ENCODE measurements at regions of chr3 and their contacts with region 1.

Region 1: DNA sequence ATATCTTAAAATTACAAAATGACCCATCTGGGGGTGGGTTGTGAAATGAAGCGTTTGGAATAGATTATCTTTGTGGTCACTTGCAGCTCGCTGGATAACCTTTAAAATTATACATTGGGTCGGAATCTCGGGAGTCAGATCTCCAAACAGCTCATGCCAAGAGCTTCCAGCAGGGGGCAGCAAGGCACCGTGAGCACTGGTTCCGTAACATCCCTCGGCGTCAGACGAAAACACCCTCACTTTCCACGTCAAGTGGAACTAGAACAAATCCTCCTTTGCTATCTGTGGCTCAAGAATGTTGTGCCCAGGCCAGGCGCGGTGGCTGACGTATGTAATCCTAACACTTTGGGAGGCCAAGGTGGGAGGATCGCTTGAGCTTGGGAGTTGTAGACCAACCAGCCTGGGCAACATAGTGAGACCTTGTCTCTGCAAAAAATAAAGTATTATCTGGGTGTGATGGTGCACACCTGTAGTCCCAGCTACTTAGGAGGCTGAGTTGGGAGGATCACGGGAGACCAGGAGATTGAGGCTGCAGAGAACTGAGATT is 31.1 kb downstream of the UMPS start:
- DNase-seq: peak; percentile 67

Region 2: GRCh38 chr3:124492811-124493210 is 268.5 kb before region 1 on chr3:
- in situ Hi-C with region 1: no loop called
- DNase-seq: peak; percentile 73

Region 3: DNA sequence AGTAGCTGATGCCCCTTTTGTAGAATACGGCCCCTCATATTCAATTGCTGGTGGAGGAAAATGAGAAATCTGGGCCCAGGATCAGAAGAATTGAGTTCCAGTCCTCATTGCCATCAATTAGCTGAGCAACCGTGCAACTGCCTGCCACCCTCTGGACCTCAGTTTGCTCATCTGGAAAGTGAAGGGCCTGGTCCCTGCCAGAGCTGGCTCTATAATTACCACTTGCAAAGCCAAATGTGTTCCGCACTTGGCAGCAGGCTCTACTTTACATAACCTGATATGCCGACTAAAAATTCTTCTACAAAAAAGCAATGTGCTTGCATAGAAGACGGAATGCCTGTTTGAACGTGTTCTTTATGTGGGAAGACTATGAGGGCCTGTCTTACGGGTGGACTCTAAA is 134.4 kb after region 1 on chr3:
- in situ Hi-C with region 1: loop called (anchors 10 kb)
- DNase-seq: no peak

Measured in ACHN (cell line).